ENCODE measurements at regions of chr4 and their contacts with region 1.

Region 1: GRCh38 chr4:22389240-22389870 is 126.5 kb downstream of the ADGRA3 start:
- DNase-seq: peak; percentile 59
- ATAC-seq: peak; percentile 87
- H3K4me3 ChIP-seq: no peak overlapping the region
- H3K27ac ChIP-seq: no peak overlapping the region
- H3K4me1 ChIP-seq: no peaks in the 10 kb centered on the region
- H3K27me3 ChIP-seq: no peaks in the 10 kb centered on the region
- CTCF ChIP-seq: peak; percentile 71
- EP300 ChIP-seq: no peak
- POLR2A ChIP-seq: no peak
- RAD21 ChIP-seq: peak; percentile 61

Region 2: DNA sequence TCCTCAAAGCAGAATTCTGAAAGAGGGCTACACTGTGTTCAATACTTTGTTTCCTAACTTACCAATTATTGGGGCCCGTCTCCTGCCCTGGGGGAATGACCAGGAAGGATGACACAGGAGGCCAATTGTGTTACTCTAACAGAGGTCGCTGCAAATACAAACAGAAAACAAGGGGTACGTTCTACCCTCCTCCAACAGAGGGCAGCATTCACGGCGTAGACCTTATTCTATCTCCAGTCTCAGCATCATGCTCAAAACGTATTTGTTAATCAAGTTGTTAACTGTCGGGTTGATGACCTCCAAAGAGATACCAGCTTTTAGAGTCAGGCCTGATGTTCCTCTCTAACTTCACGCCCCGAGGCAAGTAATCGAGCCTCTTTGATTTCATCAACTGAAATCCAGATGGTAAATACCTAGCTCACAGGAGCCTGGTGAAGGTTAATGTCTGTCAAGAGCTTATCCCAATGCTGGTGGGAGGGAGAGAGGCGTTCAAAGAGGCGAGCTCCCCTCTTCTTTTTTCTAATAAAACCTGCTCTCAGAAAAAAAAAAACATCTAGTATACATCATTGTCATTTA is 259.8 kb before region 1 on chr4:
- CTCF ChIA-PET with region 1: interaction called, 14 read pairs
- POLR2A ChIA-PET with region 1: no interaction called
- in situ Hi-C with region 1: no loop called
- intact Hi-C with region 1: loop called (anchors 1 kb)
- DNase-seq: peak; percentile 5
- ATAC-seq: peak; percentile 84
- H3K4me3 ChIP-seq: no peak overlapping the region
- H3K27ac ChIP-seq: no peak overlapping the region
- H3K4me1 ChIP-seq: no peaks in the 10 kb centered on the region
- H3K27me3 ChIP-seq: no peaks in the 10 kb centered on the region
- CTCF ChIP-seq: peak; percentile 70
- EP300 ChIP-seq: no peak
- POLR2A ChIP-seq: no peak
- RAD21 ChIP-seq: no peak

Region 3: DNA sequence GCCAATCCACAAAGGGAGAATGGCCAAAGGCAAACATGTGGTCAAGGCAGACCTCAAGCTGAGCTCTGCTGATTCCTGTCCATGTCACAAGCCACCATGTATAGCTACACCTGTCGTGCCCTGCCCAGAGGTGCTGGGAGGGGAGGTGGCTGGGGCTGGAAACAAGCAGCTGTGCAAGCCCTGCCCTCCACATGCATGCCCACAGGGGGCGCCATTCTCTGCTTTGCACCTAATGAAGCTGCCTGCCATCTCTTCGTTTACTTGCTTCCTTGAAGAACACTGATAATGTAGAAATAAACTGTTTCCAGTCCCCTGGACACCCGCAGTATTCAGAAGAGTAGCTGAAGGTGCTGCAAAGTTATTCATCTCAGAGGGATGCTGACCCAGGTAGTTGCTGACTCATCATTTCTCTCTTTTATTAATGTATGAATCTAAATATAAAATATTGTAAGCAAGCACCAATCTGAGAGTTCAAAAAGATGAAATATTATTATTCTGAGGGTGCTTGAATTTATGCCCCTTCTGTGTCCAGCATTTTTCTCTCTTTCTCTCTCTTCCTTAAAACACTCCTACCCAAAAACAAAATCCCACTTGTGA is 152.1 kb before region 1 on chr4:
- CTCF ChIA-PET with region 1: interaction called, 3 read pairs
- POLR2A ChIA-PET with region 1: no interaction called
- in situ Hi-C with region 1: no loop called
- intact Hi-C with region 1: loop called (anchors 5 kb)
- DNase-seq: peak; percentile 15
- ATAC-seq: peak; percentile 62
- H3K4me3 ChIP-seq: no peak overlapping the region
- H3K27ac ChIP-seq: no peak overlapping the region
- H3K4me1 ChIP-seq: peaks cover 14% of the 10 kb centered on the region
- H3K27me3 ChIP-seq: no peaks in the 10 kb centered on the region; a peak in 1 of 5 replicates
- CTCF ChIP-seq: peak; percentile 46
- EP300 ChIP-seq: no peak
- POLR2A ChIP-seq: no peak
- RAD21 ChIP-seq: no peak